ENCODE measurements at regions of chr17 and their contacts with region 1.

Region 1: DNA sequence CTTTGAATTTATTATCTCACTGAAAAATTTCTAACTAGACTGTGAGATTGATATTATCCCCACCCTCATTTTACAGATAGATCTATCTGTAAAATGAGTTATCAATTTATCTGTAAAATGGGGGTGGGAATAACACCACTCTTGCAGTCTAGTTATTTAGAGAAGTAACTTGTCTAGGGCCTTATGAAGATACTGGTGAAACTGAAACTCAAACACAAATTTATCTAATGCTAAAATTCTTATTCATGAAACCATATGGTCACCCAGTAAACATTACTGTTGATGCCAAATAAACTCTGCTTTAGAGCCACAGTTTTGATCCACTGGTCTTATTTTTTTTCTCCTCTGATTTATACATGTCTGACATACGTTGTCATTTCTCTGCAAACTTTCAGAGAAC is 52.1 kb upstream of the SMIM36 start:
- DNase-seq: no peak
- H3K4me3 Mint-ChIP-seq: no peak overlapping the region
- H3K27ac Mint-ChIP-seq: no peak overlapping the region
- H3K4me1 Mint-ChIP-seq: peaks cover 7% of the 10 kb centered on the region
- H3K27me3 Mint-ChIP-seq: peaks cover 4% of the 10 kb centered on the region

Region 2: GRCh38 chr17:55582897-55583296 is 19.5 kb after region 1 on chr17:
- CTCF ChIA-PET with region 1: no interaction called
- intact Hi-C with region 1: loop called (anchors 1 kb)
- DNase-seq: no peak
- H3K4me3 Mint-ChIP-seq: no peak overlapping the region
- H3K27ac Mint-ChIP-seq: no peak overlapping the region
- H3K4me1 Mint-ChIP-seq: peaks cover 46% of the 10 kb centered on the region
- H3K27me3 Mint-ChIP-seq: no peaks in the 10 kb centered on the region